ENCODE measurements at regions of chr1 and their contacts with region 1.

Region 1: DNA sequence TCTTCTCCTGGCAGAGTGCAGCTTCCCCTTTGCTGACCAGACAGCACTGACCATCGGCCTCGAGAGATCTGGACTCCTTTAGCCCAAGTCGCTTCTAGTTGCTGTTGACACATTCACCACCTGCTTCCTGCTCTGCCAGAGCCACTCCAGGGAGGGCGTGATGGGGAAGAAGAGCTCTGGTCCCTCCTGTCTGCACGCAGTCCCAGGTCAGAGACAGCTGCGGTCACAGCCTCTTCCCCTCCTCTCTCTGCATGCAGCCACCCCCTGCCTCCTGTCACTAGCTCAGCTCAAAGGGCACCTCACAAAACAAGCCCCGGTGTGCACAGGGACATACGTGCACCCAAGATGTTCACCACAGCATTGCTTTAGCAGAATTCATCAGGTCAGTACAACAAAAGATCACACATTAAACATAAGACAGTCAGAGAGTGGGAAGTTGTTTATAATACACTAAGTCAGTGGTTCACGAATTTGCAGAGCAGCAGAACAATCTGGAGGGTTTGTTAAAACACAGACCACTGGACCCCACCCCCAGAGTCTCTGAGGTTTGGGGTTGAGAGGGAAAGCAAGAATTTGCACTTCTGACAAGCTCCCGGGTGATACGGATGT is 132.9 kb downstream of the SYF2 start:
- DNase-seq: peak; percentile 87
- ATAC-seq: peak; percentile 74
- H3K4me3 Mint-ChIP-seq: peak overlapping the region; percentile 42
- H3K27ac Mint-ChIP-seq: peak overlapping the region; percentile 76
- H3K4me1 Mint-ChIP-seq: peaks cover 73% of the 10 kb centered on the region
- H3K27me3 Mint-ChIP-seq: no peaks in the 10 kb centered on the region
- CTCF ChIP-seq: no peak

Region 2: GRCh38 chr1:24018611-24019580 is 1080.6 kb before region 1 on chr1:
- CTCF ChIA-PET with region 1: no interaction called
- POLR2A ChIA-PET with region 1: no interaction called
- intact Hi-C with region 1: no loop called
- DNase-seq: no peak
- ATAC-seq: no peak
- H3K4me3 Mint-ChIP-seq: no peak overlapping the region
- H3K27ac Mint-ChIP-seq: no peak overlapping the region
- H3K4me1 Mint-ChIP-seq: no peaks in the 10 kb centered on the region
- H3K27me3 Mint-ChIP-seq: no peaks in the 10 kb centered on the region
- CTCF ChIP-seq: no peak

Region 3: DNA sequence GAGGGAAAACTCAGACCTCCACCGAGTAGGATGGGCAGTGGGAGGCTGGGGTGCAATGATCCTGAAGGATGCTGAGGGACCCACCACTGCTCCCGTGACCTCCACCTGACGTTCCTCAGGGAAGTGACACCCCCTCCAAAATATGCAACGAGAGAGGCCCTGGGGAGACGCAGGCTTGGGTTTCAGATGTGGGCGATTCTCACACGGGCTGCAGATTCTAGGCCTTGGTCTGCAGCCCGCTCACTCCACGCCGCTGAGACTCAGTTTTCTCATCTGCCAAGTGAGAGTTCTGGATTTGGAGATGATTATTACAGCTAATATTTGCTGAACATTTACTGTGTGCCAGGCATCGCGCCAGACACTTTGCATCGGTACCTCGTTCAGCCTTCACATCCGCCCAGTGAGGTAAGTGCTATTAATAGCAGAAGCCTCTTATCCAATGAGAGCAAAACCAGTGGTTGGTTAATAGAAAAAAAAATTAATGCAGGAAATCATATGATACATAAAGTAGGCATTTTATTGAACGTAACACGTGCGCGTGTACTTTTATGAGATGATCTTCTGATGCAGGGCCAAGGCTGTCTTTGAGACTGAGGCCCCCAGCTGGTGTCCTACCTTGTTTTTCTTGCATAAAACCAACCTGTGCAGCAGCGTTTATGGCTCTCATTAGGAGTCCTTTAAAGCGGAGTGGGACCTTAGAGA is 67.3 kb before region 1 on chr1:
- CTCF ChIA-PET with region 1: interaction called, 49 read pairs
- POLR2A ChIA-PET with region 1: no interaction called
- intact Hi-C with region 1: loop called (anchors 5 kb)
- DNase-seq: peak; percentile 83
- ATAC-seq: peak; percentile 39
- H3K4me3 Mint-ChIP-seq: no peak overlapping the region
- H3K27ac Mint-ChIP-seq: no peak overlapping the region
- H3K4me1 Mint-ChIP-seq: peaks cover 84% of the 10 kb centered on the region
- H3K27me3 Mint-ChIP-seq: no peaks in the 10 kb centered on the region
- CTCF ChIP-seq: no peak

Region 4: DNA sequence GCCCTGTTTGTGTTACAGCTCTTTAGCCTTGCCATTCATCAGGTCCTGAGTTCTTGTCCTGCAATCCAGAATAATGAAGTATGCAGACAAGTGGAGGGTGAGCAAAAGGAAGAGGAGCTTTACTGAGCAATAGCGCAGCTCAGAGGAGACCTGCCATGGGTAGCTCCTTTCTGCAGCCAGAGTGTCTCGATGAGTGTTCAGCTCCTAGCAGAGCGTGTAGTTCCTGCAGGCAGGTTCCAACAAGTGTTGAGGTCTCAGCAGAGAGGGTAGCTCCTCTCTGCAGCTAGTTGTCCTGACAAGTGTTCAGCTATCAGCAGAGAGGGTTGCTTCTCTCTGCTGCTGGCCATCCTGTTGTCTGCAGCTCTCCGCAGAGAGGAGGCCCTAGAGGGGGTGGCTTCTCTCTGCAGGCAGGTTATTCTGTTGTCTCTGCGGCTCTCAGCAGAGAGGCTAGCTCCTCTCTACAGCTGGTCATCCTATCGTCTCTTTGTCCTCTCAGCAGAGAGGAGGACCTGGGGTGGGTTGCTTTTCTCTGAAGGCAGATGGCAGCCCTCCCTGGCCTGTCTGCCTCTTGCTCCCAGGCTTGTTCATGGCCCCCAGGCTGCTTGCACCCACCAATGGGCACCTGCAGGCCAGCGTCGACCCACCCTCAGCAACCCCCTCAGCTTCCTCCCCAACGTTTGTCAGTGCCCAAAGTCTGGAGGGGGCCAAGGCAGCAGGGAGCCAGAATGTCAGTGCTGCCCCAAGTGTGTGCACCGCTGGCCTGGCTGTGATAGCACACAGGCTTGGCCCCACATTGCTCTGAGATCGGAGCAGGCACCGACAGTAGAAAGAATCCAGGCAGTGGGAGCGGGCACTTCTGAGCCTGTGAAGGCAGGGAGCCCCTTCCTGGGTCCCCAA is 56.9 kb before region 1 on chr1:
- CTCF ChIA-PET with region 1: interaction called, 49 read pairs
- POLR2A ChIA-PET with region 1: interaction called, 4 read pairs
- intact Hi-C with region 1: no loop called
- DNase-seq: no peak
- ATAC-seq: no peak
- H3K4me3 Mint-ChIP-seq: no peak overlapping the region
- H3K27ac Mint-ChIP-seq: no peak overlapping the region
- H3K4me1 Mint-ChIP-seq: peaks cover 24% of the 10 kb centered on the region
- H3K27me3 Mint-ChIP-seq: no peaks in the 10 kb centered on the region
- CTCF ChIP-seq: no peak

Region 5: GRCh38 chr1:25086518-25087079 is 12.8 kb before region 1 on chr1:
- CTCF ChIA-PET with region 1: interaction called, 10 read pairs
- POLR2A ChIA-PET with region 1: interaction called, 9 read pairs
- intact Hi-C with region 1: no loop called
- DNase-seq: no peak
- ATAC-seq: no peak
- H3K4me3 Mint-ChIP-seq: no peak overlapping the region
- H3K27ac Mint-ChIP-seq: no peak overlapping the region
- H3K4me1 Mint-ChIP-seq: peaks cover 11% of the 10 kb centered on the region
- H3K27me3 Mint-ChIP-seq: no peaks in the 10 kb centered on the region
- CTCF ChIP-seq: no peak

Region 6: DNA sequence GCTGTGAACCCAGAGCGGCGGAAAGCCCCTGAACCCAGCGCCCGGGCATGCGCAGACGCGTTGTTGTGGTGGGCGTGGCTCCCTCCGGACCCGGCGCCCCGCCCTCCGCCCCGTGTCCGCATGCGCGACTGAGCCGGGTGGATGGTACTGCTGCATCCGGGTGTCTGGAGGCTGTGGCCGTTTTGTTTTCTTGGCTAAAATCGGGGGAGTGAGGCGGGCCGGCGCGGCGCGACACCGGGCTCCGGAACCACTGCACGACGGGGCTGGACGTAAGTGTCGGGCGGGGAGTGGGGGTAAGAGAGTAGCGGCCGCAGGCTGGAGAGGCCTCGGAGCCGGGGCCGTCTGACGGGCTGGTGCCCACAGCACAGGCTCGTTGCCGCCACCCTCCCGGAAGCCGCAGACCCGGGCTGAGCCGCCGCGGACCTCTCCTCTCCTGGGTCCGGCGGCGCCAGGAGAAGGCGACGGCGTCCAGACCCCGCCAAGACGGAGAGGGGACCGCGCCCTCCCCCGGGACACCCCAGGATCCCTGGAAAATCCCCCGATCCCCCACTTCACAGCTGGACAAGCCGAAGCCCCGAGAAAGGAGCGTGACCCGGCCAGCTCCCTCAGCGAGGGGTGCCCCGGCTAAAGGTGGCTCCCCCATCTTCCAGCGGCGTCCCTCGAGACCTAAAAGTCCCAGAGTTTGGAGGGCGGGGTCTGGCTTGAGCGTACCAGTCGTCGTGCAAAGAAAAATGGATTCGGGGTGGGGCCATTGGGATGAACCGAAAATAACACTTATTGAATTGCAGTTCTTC is 238.9 kb after region 1 on chr1 and contains the start of gene TMEM50A:
- CTCF ChIA-PET with region 1: no interaction called
- POLR2A ChIA-PET with region 1: no interaction called
- intact Hi-C with region 1: no loop called
- DNase-seq: peak; percentile 92
- ATAC-seq: peak; percentile 81
- H3K4me3 Mint-ChIP-seq: peak within 1 kb of the TSS; percentile 93
- H3K27ac Mint-ChIP-seq: peak within 1 kb of the TSS; percentile 96
- H3K4me1 Mint-ChIP-seq: peaks cover 32% of the 10 kb centered on the region
- H3K27me3 Mint-ChIP-seq: no peaks in the 10 kb centered on the region
- CTCF ChIP-seq: no peak
- total RNA-seq, gene TMEM50A: 88.5 to 89.3 TPM